Left ventricle myocardium inferior (tissue), 1 donor: ENCODE measurements at regions of chr3 and their contacts with region 1.

Region 1: GRCh38 chr3:134378384-134378783 is 4.1 kb upstream of the AMOTL2 start:
- DNase-seq: no peak
- H3K4me3 ChIP-seq: no peak overlapping the region
- H3K27ac ChIP-seq: peak overlapping the region; percentile 62
- H3K4me1 ChIP-seq: peaks cover 40% of the 10 kb centered on the region
- H3K27me3 ChIP-seq: no peaks in the 10 kb centered on the region
- CTCF ChIP-seq: peak; percentile 76

Region 2: DNA sequence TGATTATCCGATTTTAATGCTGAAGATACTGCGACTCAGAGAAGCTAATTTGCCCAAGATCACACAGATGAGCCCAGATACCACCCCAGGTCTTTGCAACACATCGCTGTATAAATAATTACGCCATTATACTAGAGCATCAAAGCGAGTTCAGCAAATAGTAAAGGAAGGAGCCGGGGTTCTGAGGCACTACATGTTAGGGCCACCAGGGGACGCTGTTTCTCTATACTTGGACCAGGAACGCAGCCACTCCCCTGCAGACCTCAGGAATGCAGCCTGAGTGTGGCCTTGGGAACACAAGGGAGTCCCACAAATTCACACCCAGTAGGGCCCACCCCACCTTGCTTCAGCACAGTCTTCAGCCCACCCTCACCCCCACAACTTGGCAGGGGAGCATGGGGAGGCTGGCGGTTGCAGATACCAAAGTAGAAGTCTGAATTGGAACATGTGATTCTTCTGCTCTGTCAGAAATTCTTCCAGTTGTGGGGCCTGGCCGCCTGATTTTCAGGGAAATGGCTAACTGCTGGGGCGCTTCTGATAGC is 70.0 kb before region 1 on chr3:
- intact Hi-C with region 1: loop called (anchors 2 kb)
- DNase-seq: peak; percentile 80
- H3K4me3 ChIP-seq: peak overlapping the region; percentile 29
- H3K27ac ChIP-seq: peak overlapping the region; percentile 85
- H3K4me1 ChIP-seq: peaks cover 44% of the 10 kb centered on the region
- H3K27me3 ChIP-seq: no peaks in the 10 kb centered on the region
- CTCF ChIP-seq: peak; percentile 99

Region 3: GRCh38 chr3:134319931-134320330 is 58.5 kb before region 1 on chr3:
- intact Hi-C with region 1: no loop called
- DNase-seq: no peak
- H3K4me3 ChIP-seq: no peak overlapping the region
- H3K27ac ChIP-seq: no peak overlapping the region
- H3K4me1 ChIP-seq: peaks cover 17% of the 10 kb centered on the region
- H3K27me3 ChIP-seq: no peaks in the 10 kb centered on the region
- CTCF ChIP-seq: no peak

Region 4: GRCh38 chr3:134331008-134331830 is 47.2 kb before region 1 on chr3:
- intact Hi-C with region 1: no loop called
- DNase-seq: no peak
- H3K4me3 ChIP-seq: no peak overlapping the region
- H3K27ac ChIP-seq: peak overlapping the region; percentile 55
- H3K4me1 ChIP-seq: peaks cover 69% of the 10 kb centered on the region
- H3K27me3 ChIP-seq: no peaks in the 10 kb centered on the region
- CTCF ChIP-seq: no peak